ENCODE measurements at regions of chr16 and their contacts with region 1.

Region 1: GRCh38 chr16:67816240-67817031 is 9.7 kb downstream of the TSNAXIP1 start:
- DNase-seq: peak; percentile 93
- ATAC-seq: peak; percentile 96
- H3K4me3 Mint-ChIP-seq: no peak overlapping the region
- H3K27ac Mint-ChIP-seq: peak overlapping the region; percentile 20
- H3K4me1 Mint-ChIP-seq: peaks cover 7% of the 10 kb centered on the region
- H3K27me3 Mint-ChIP-seq: peaks cover 5% of the 10 kb centered on the region

Region 2: GRCh38 chr16:67786491-67786890 is 29.9 kb before region 1 on chr16:
- CTCF ChIA-PET with region 1: interaction called, 14 read pairs
- POLR2A ChIA-PET with region 1: no interaction called
- DNase-seq: no peak
- ATAC-seq: no peak
- H3K4me3 Mint-ChIP-seq: no peak overlapping the region
- H3K27ac Mint-ChIP-seq: no peak overlapping the region
- H3K4me1 Mint-ChIP-seq: peaks cover 14% of the 10 kb centered on the region
- H3K27me3 Mint-ChIP-seq: no peaks in the 10 kb centered on the region

Region 3: GRCh38 chr16:67847064-67847861 is 30.8 kb after region 1 on chr16 and contains the start of gene CENPT:
- CTCF ChIA-PET with region 1: interaction called, 40 read pairs
- POLR2A ChIA-PET with region 1: no interaction called
- DNase-seq: no peak
- ATAC-seq: peak; percentile 50
- H3K4me3 Mint-ChIP-seq: peak within 1 kb of the TSS; percentile 96
- H3K27ac Mint-ChIP-seq: peak within 1 kb of the TSS; percentile 82
- H3K4me1 Mint-ChIP-seq: peaks cover 47% of the 10 kb centered on the region
- H3K27me3 Mint-ChIP-seq: no peaks in the 10 kb centered on the region
- total RNA-seq, gene CENPT: 58.9 to 63.6 TPM

Region 4: DNA sequence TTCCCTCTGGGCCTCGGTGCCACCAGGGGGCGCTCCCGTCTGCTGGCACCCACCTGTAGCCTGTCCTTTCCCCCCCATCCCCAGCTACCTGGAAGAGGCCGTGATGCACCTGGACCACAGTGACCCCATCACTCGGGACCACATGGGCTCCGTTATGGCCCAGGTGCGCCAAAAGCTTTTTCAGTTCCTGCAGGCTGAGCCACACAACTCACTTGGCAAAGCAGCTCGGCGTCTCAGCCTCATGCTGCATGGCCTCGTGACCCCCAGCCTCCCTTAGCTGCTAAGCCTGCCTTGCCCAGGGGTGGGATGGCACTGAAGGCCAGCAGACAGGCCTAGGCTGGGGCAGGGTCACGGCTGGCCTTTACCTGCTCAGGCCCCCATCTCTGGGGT is 67.4 kb after region 1 on chr16:
- CTCF ChIA-PET with region 1: interaction called, 17 read pairs
- POLR2A ChIA-PET with region 1: no interaction called
- DNase-seq: peak; percentile 76
- ATAC-seq: peak; percentile 81
- H3K4me3 Mint-ChIP-seq: no peak overlapping the region
- H3K27ac Mint-ChIP-seq: no peak overlapping the region
- H3K4me1 Mint-ChIP-seq: no peaks in the 10 kb centered on the region
- H3K27me3 Mint-ChIP-seq: no peaks in the 10 kb centered on the region

Region 5: DNA sequence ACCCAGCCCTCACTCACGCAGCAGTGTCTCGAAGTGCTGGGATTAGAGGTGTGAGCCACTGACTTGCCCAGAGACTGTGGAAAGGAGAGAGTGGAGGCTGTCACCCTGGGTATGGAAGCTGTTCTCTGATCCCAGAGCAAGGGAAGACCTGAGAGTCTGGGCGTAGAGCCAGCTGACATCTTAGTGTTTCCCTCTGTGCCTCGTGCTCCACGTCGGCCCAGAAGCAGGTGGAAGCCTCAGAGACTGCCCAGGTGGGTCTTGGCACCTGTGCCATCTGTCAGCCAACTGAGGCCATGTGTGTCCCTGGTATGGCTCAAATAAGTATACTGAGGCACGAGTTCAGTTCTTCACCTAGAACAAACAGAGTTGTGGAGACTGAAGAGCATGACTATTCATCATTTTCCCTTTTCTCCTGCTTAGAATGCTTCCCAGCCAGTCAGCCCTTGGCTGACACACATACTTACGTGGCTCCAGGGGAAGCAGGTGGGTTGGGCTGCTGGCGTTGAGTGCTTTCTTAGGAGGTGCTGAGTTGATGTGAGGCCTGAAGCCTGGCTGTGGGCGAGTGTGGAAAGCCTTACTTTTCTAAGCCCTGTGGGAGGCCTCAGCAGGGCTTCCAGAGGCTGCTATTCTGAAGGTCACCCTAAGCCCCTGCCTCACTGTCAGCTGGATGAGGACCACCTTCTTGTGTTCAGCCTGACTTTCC is 107.1 kb after region 1 on chr16:
- CTCF ChIA-PET with region 1: interaction called, 21 read pairs
- POLR2A ChIA-PET with region 1: interaction called, 4 read pairs
- DNase-seq: no peak
- ATAC-seq: no peak
- H3K4me3 Mint-ChIP-seq: no peak overlapping the region
- H3K27ac Mint-ChIP-seq: no peak overlapping the region
- H3K4me1 Mint-ChIP-seq: peaks cover 8% of the 10 kb centered on the region
- H3K27me3 Mint-ChIP-seq: no peaks in the 10 kb centered on the region

Region 6: GRCh38 chr16:68005786-68006286 is 189.4 kb after region 1 on chr16:
- CTCF ChIA-PET with region 1: no interaction called
- POLR2A ChIA-PET with region 1: no interaction called
- DNase-seq: peak; percentile 56
- ATAC-seq: peak; percentile 91
- H3K4me3 Mint-ChIP-seq: no peak overlapping the region
- H3K27ac Mint-ChIP-seq: peak overlapping the region; percentile 90
- H3K4me1 Mint-ChIP-seq: peaks cover 20% of the 10 kb centered on the region
- H3K27me3 Mint-ChIP-seq: no peaks in the 10 kb centered on the region

Region 7: GRCh38 chr16:68040507-68041288 is 224.3 kb after region 1 on chr16:
- CTCF ChIA-PET with region 1: interaction called, 18 read pairs
- POLR2A ChIA-PET with region 1: no interaction called
- DNase-seq: peak; percentile 93
- ATAC-seq: peak; percentile 99
- H3K4me3 Mint-ChIP-seq: no peak overlapping the region
- H3K27ac Mint-ChIP-seq: peak overlapping the region; percentile 69
- H3K4me1 Mint-ChIP-seq: peaks cover 26% of the 10 kb centered on the region
- H3K27me3 Mint-ChIP-seq: no peaks in the 10 kb centered on the region